B cell (primary cell): ENCODE measurements at regions of chr11 and their contacts with region 1.

Region 1: GRCh38 chr11:130434521-130435223 is 6.3 kb upstream of the ADAMTS8 start:
- DNase-seq: peak; percentile 83
- ATAC-seq: peak; percentile 88
- H3K4me3 ChIP-seq: peak overlapping the region; percentile 52 to 95 (median 73)
- H3K4me3 Mint-ChIP-seq: no peak overlapping the region
- H3K27ac ChIP-seq: no peak overlapping the region
- H3K27ac Mint-ChIP-seq: no peak overlapping the region
- H3K4me1 ChIP-seq: peaks cover 4% of the 10 kb centered on the region in 2 donors
- H3K4me1 Mint-ChIP-seq: peaks cover 3% of the 10 kb centered on the region
- H3K27me3 ChIP-seq: peaks cover 0 to 12% (median 7%) of the 10 kb centered on the region in 4 experiments
- H3K27me3 Mint-ChIP-seq: peaks cover 41% of the 10 kb centered on the region
- CTCF ChIP-seq: peak; percentile 96

Region 2: DNA sequence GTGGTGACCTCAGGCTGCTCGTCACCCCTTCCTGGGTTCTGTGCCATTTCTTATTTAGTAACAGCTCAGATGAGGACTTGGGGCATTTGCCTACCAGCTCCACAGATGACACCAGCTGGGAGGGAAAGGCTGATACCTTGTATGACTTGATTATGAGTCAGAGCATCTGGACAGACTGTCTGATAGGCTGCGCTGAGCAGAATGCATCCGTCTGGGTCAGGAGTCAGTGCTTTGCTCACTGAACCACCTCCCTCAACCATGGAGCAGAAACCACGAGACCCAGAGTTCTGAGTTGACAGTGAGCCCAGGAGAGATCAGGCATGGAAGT is 268.3 kb before region 1 on chr11:
- CTCF ChIA-PET with region 1: no interaction called
- POLR2A ChIA-PET with region 1: no interaction called
- intact Hi-C with region 1: no loop called
- DNase-seq: peak; percentile 83
- ATAC-seq: peak; percentile 83
- H3K4me3 ChIP-seq: no peak overlapping the region
- H3K4me3 Mint-ChIP-seq: peak overlapping the region; percentile 82
- H3K27ac ChIP-seq: peak overlapping the region; percentile 54 to 77
- H3K27ac Mint-ChIP-seq: peak overlapping the region; percentile 95
- H3K4me1 ChIP-seq: peaks cover 41 to 73% of the 10 kb centered on the region in 2 donors
- H3K4me1 Mint-ChIP-seq: peaks cover 86% of the 10 kb centered on the region
- H3K27me3 ChIP-seq: no peaks in the 10 kb centered on the region
- H3K27me3 Mint-ChIP-seq: no peaks in the 10 kb centered on the region
- CTCF ChIP-seq: no peak

Region 3: DNA sequence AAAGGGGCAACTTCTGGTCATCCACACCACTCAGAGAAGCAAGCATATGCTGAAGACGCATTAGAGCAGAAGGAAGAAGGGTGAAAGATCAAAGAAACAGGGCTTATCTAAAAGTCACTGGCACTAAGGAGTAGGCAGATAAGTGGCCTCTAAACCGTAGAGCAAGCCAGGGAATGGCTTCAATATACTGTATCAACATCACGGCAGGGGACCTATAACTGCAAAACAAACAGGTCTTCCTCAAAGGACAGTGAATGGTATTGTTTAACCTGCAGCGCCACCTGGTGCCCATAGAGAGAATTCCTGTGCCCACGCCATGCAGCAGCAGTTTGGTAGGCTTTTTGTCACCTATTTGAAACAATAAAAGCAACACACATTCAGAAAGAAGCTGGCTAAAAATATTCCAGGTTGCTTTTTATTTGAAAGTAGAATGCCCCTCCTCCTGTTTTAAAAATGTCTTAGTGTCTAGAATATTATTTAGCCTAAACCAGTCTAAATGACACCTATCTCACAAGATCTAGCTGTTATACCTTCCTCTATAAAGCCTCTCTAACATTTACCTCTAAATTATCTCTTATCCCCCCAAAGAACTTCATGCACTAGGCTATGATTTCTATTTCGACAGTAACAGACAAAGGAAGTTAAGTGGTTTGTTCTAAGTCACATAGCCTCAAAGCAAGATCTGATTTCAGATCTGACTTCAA is 459.8 kb after region 1 on chr11:
- CTCF ChIA-PET with region 1: interaction called, 34 read pairs
- POLR2A ChIA-PET with region 1: no interaction called
- intact Hi-C with region 1: loop called (anchors 1 kb)
- DNase-seq: peak; percentile 70
- ATAC-seq: peak; percentile 72
- H3K4me3 ChIP-seq: no peak overlapping the region
- H3K4me3 Mint-ChIP-seq: no peak overlapping the region
- H3K27ac ChIP-seq: no peak overlapping the region
- H3K27ac Mint-ChIP-seq: no peak overlapping the region
- H3K4me1 ChIP-seq: no peaks in the 10 kb centered on the region
- H3K4me1 Mint-ChIP-seq: no peaks in the 10 kb centered on the region
- H3K27me3 ChIP-seq: no peaks in the 10 kb centered on the region
- H3K27me3 Mint-ChIP-seq: no peaks in the 10 kb centered on the region
- CTCF ChIP-seq: peak; percentile 95

Region 4: DNA sequence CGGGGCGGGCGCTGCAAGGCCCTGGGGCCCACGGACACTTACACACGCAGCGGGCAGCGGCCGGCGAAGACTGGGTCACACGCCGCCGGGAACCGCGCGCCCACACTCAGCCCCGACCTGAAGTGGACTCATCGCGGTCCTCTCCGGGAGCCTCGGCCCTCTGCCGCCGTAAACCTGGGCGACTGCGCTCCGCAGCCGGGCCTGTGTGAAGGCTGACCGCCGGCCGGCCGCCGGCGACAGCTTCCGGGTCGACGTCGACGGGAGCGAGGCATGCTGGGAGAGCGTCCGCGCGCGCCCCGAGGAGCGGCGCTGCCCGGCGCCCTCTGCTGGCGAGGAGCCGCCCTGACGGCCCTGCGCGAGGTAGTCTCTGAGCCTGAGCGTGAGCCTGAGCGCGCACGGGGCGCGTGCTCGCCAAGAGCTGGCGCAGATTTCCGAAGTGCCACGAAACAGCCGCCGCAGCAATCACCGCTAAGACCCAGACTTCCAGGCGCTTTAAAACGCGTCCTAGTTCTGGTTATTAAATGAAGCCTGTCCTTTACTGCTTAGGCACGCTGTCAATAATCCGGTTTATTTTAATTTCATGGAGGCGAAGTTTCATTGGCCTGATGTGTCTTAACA is 481.7 kb after region 1 on chr11 and contains the start of gene SNX19:
- CTCF ChIA-PET with region 1: interaction called, 8 read pairs
- POLR2A ChIA-PET with region 1: no interaction called
- intact Hi-C with region 1: loop called (anchors 1 kb)
- DNase-seq: peak; percentile 94
- ATAC-seq: peak; percentile 99
- H3K4me3 ChIP-seq: peak within 1 kb of the TSS; percentile 70 to 97 (median 85)
- H3K4me3 Mint-ChIP-seq: peak within 1 kb of the TSS; percentile 91
- H3K27ac ChIP-seq: peak within 1 kb of the TSS; percentile 73 to 91
- H3K27ac Mint-ChIP-seq: peak within 1 kb of the TSS; percentile 90
- H3K4me1 ChIP-seq: peaks cover 12 to 24% of the 10 kb centered on the region in 2 donors
- H3K4me1 Mint-ChIP-seq: peaks cover 41% of the 10 kb centered on the region
- H3K27me3 ChIP-seq: peaks cover 0 to 9% (median 0%) of the 10 kb centered on the region in 4 experiments
- H3K27me3 Mint-ChIP-seq: peaks cover 21% of the 10 kb centered on the region
- CTCF ChIP-seq: peak; percentile 97
- total RNA-seq, gene SNX19: 74.0 and 76.0 TPM in 2 replicates